Activated T-helper 1 cell treated with anti-CD3 and anti-CD28 coated beads, Interleukin-12 subunit alpha, Interleukin-12 subunit beta, Interleukin-2, Interleukin-4 antibody, amounts not matched to agents 30 ng/mL and 10 ng/mL and 1 ng/mL, durations not matched to agents 14 hours and 24 hours and 36 hours (primary cell): ENCODE measurements at regions of chr4 and their contacts with region 1.

Region 1: GRCh38 chr4:101527188-101527587 is 179.9 kb upstream of the PPP3CA start:
- DNase-seq: peak; percentile 68
- H3K4me3 Mint-ChIP-seq: peak overlapping the region; percentile 8
- H3K27ac Mint-ChIP-seq: peak overlapping the region; percentile 67
- H3K4me1 Mint-ChIP-seq: peaks cover 32% of the 10 kb centered on the region
- H3K27me3 Mint-ChIP-seq: peaks cover 26% of the 10 kb centered on the region

Region 2: DNA sequence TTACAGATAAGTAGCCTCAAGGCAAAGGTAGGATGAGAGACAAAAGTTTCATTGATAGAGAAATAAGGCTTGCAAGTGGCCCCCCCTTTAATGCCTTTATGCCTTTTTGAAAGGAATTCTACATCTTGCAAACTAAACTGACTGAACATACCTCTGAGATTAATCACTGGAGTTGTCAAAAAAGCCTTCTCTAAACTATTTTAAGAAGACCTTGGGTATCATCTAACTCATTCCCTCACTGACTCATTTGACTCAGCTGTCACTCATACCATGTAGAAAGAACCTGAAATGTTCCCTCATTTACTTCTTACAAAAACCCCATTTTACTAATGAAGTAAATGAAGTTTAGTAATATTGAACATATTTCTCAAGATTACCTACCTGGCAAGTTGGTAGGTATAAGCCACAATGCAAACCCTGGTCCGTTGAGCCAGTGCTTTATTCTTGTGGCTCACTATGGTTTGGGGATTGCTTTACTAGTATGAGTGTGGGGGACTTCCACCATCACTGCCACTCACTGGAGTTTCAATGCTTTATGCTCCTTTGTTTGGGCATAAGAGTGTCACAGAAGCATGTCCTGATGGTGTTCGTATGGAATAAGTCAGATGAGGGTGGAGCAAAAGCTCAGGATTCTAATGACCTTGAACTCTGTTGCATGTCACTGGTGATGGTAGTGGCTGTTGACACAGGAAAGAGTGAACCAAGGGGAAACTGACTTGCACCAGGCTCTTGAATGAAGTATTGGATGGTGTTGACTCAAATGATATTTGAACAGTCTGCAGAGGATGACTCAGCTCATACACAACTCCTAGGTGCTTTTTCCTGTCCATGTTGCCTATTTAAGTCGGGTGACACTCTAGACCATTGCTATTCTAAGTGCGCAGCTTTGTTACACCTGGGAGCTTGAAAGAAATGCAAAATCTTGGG is 703.9 kb before region 1 on chr4:
- intact Hi-C with region 1: loop called (anchors 1 kb)
- DNase-seq: peak; percentile 32
- H3K4me3 Mint-ChIP-seq: no peak overlapping the region
- H3K27ac Mint-ChIP-seq: peak overlapping the region; percentile 79
- H3K4me1 Mint-ChIP-seq: peaks cover 40% of the 10 kb centered on the region
- H3K27me3 Mint-ChIP-seq: no peaks in the 10 kb centered on the region

Region 3: DNA sequence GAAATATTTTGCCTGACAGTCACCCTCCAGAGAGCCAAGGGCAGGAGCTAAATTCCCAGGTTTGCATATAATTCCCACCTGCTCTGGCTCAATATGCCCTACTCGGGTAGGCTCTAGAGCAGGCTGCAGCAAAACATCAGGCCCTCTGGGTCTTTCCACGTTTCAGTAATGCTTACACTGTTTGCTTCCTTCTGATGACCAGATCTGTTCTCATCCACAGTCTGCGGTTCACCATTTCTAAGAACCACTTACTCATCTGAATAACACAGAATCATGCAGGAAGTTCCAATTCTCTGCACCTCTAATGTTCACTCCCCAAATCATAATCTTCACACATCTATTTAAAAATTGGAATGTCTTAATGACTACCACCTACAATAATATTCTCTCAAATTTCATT is 321.3 kb before region 1 on chr4:
- intact Hi-C with region 1: loop called (anchors 1 kb)
- DNase-seq: peak; percentile 56
- H3K4me3 Mint-ChIP-seq: peak overlapping the region; percentile 0
- H3K27ac Mint-ChIP-seq: peak overlapping the region; percentile 67
- H3K4me1 Mint-ChIP-seq: peaks cover 42% of the 10 kb centered on the region
- H3K27me3 Mint-ChIP-seq: no peaks in the 10 kb centered on the region

Region 4: GRCh38 chr4:101328063-101328602 is 199.1 kb before region 1 on chr4:
- intact Hi-C with region 1: loop called (anchors 1 kb)
- DNase-seq: peak; percentile 21
- H3K4me3 Mint-ChIP-seq: peak overlapping the region; percentile 45
- H3K27ac Mint-ChIP-seq: peak overlapping the region; percentile 81
- H3K4me1 Mint-ChIP-seq: peaks cover 31% of the 10 kb centered on the region
- H3K27me3 Mint-ChIP-seq: peaks cover 24% of the 10 kb centered on the region

Region 5: DNA sequence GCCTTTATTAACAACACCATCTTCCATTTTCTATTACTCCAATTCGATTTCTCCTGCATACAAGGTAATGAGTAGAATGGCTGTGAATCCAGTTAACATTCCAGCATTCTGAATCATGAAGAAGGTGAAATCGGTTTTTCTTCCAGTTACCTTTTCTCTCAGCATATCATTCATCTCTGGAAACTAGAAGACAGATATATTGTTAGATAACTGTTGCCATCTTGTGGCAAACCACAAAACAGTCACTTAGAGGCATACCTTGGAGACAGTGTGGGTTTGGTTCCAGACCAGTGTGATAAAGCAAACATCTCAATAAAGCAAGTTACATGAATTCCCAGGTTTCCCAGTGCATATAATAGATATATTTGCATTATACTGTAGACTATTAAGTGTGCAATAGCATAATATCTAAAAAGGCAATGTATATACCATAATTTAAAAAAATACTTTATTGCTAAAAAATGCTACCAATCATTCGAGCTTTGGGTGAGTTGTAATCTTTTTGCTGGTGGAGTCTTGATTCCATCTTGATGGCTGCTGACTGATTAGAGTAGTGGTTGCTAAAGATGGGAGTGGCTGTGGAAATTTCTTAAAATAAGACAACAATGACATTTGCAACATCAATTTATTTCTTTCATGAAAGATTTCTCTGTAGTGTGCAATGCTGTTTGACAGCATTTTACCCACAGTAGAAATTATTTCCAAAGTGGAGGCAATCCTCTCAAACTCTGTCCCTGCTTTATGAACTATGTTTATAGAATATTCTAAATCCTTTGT is 736.0 kb after region 1 on chr4:
- intact Hi-C with region 1: loop called (anchors 2 kb)
- DNase-seq: no peak
- H3K4me3 Mint-ChIP-seq: no peak overlapping the region
- H3K27ac Mint-ChIP-seq: peak overlapping the region; percentile 19
- H3K4me1 Mint-ChIP-seq: peaks cover 16% of the 10 kb centered on the region
- H3K27me3 Mint-ChIP-seq: no peaks in the 10 kb centered on the region